ENCODE measurements at regions of chr14 and their contacts with region 1.

Region 1: GRCh38 chr14:103014466-103015319 is 42.7 kb downstream of the CDC42BPB start:
- DNase-seq: no peak
- ATAC-seq: no peak
- H3K4me3 ChIP-seq: no peak overlapping the region
- H3K27ac ChIP-seq: peak overlapping the region in 3 of 10 donors; percentile 13 to 25 (median 17)
- H3K4me1 ChIP-seq: peaks cover 7 to 62% (median 42%) of the 10 kb centered on the region in 9 donors
- H3K27me3 ChIP-seq: no peaks in the 10 kb centered on the region
- CTCF ChIP-seq: no peak

Region 2: DNA sequence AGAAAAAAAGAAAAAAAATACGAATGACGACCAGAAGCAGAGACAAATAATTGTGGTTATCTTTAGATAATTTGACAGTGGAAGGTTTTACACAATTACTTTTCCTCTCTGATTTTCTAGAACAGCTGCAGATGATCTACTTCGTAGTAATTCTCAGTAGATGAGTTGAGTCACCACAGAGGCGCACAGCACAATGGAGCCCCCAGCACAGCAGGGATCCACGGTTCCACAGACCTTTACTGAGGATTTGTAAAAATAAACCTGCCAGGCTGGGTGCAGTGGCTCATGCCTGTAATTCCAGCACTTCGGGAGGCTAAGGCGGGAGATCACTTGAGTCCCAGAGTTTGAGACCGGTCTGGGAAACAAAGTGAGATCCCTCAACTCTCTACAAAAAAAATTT is 62.9 kb before region 1 on chr14:
- intact Hi-C with region 1: loop called in 1 of 10 experiments (anchors 1 kb)
- DNase-seq: no peak
- ATAC-seq: no peak
- H3K4me3 ChIP-seq: no peak overlapping the region
- H3K27ac ChIP-seq: no peak overlapping the region
- H3K4me1 ChIP-seq: peaks cover 0 to 20% (median 7%) of the 10 kb centered on the region in 9 donors
- H3K27me3 ChIP-seq: no peaks in the 10 kb centered on the region
- CTCF ChIP-seq: no peak

Region 3: GRCh38 chr14:103257201-103257962 is 242.7 kb after region 1 on chr14:
- intact Hi-C with region 1: no loop called
- DNase-seq: no peak
- ATAC-seq: no peak
- H3K4me3 ChIP-seq: no peak overlapping the region
- H3K27ac ChIP-seq: no peak overlapping the region
- H3K4me1 ChIP-seq: peaks cover 0 to 16% (median 6%) of the 10 kb centered on the region in 9 donors
- H3K27me3 ChIP-seq: peaks cover 0 to 9% (median 5%) of the 10 kb centered on the region in 7 donors
- CTCF ChIP-seq: no peak

Measured in heart right ventricle (tissue), 16 donors.